Activated CD4-positive, alpha-beta memory T cell treated with anti-CD3 and anti-CD28 coated beads, Interleukin-2, amount 10 ng/mL, durations not matched to agents 7 days and 5 days (primary cell): ENCODE measurements at regions of chr12 and their contacts with region 1.

Region 1: GRCh38 chr12:112096667-112097066 is 11.9 kb downstream of the NAA25 start:
- DNase-seq: no peak
- H3K4me3 Mint-ChIP-seq: no peak overlapping the region
- H3K27ac Mint-ChIP-seq: peak overlapping the region; percentile 75
- H3K4me1 Mint-ChIP-seq: peaks cover 36% of the 10 kb centered on the region
- H3K27me3 Mint-ChIP-seq: no peaks in the 10 kb centered on the region

Region 2: DNA sequence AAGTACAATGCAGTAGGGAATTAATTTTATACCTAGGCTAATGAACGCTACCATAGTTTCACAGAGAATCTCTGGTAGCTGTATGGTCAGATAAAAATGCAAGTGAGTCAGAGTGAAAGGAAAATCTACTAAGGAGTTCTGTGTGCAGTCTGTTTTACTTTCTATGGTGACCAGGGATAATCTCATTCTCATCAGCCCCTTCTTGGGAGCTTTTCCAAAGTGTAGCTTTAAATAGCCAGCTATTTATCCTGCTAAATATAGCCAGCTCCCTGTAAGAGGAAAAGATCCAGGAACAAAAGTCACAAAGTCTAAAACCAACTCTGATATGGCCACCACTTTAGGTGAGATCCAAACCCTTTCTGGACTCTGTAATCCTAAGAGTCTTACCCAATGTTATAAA is 159.2 kb before region 1 on chr12:
- CTCF ChIA-PET with region 1: no interaction called
- POLR2A ChIA-PET with region 1: no interaction called
- DNase-seq: no peak
- H3K4me3 Mint-ChIP-seq: no peak overlapping the region
- H3K27ac Mint-ChIP-seq: no peak overlapping the region
- H3K4me1 Mint-ChIP-seq: no peaks in the 10 kb centered on the region
- H3K27me3 Mint-ChIP-seq: no peaks in the 10 kb centered on the region

Region 3: GRCh38 chr12:112029301-112029700 is 67.4 kb before region 1 on chr12:
- CTCF ChIA-PET with region 1: no interaction called
- POLR2A ChIA-PET with region 1: no interaction called
- DNase-seq: no peak
- H3K4me3 Mint-ChIP-seq: no peak overlapping the region
- H3K27ac Mint-ChIP-seq: no peak overlapping the region
- H3K4me1 Mint-ChIP-seq: peaks cover 19% of the 10 kb centered on the region
- H3K27me3 Mint-ChIP-seq: no peaks in the 10 kb centered on the region

Region 4: DNA sequence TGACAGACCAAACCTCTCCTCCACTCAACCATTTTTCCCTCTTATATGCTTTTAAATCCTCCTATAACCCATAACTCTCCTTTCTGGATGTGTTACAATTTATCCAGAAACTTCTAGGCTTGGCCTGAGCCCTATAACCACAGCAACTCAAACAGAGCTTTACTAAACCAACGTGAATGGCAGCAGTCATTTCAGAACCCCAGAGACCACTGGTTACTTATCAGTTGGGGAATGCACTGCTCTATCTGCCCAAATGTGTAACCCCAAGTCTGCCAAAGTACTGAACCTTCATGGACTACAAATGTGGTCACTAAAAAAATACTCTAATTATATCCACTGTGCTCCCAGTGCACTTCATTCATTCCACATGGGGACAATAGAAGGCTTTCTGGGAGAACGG is 30.1 kb before region 1 on chr12:
- CTCF ChIA-PET with region 1: no interaction called
- POLR2A ChIA-PET with region 1: no interaction called
- DNase-seq: no peak
- H3K4me3 Mint-ChIP-seq: no peak overlapping the region
- H3K27ac Mint-ChIP-seq: no peak overlapping the region
- H3K4me1 Mint-ChIP-seq: peaks cover 3% of the 10 kb centered on the region
- H3K27me3 Mint-ChIP-seq: no peaks in the 10 kb centered on the region

Region 5: GRCh38 chr12:112125250-112125999 is 28.8 kb after region 1 on chr12 and contains the start of gene TRAFD1:
- CTCF ChIA-PET with region 1: interaction called, 4 read pairs
- POLR2A ChIA-PET with region 1: interaction called, 14 read pairs
- DNase-seq: peak; percentile 99
- H3K4me3 Mint-ChIP-seq: peak within 1 kb of the TSS; percentile 89
- H3K27ac Mint-ChIP-seq: peak within 1 kb of the TSS; percentile 81
- H3K4me1 Mint-ChIP-seq: peaks cover 41% of the 10 kb centered on the region
- H3K27me3 Mint-ChIP-seq: peaks cover 3% of the 10 kb centered on the region
- total RNA-seq, gene TRAFD1: 74.8 to 75.5 TPM

Region 6: DNA sequence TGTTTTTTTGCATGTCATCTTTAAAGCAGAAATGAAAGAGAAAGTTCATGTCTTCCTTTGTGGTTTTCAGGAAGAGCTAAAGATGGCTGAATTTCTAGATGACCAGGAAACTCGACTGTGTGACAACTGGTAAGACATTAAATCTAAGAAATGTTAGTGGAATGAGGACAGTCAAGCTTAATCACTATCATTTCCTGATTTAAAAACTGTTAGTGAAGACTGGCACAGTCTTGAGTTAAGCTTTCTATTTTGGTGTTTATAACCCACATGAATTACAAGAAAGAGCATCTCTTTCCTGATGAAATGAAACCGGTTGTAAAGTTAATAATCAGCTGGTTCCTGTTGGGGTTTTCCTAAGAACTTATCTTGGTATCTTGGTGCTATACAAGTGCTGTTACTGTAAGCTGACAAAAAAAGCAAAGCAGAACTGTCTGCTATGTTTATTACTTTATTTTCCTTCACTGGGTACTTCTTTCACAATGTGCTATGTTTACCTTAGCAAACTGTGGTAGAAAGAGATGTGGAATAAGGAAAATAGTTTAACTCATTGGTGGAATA is 33.9 kb after region 1 on chr12:
- CTCF ChIA-PET with region 1: interaction called, 4 read pairs
- POLR2A ChIA-PET with region 1: interaction called, 14 read pairs
- DNase-seq: no peak
- H3K4me3 Mint-ChIP-seq: peak overlapping the region; percentile 70
- H3K27ac Mint-ChIP-seq: peak overlapping the region; percentile 89
- H3K4me1 Mint-ChIP-seq: peaks cover 56% of the 10 kb centered on the region
- H3K27me3 Mint-ChIP-seq: no peaks in the 10 kb centered on the region